PC-9 (cell line): ENCODE measurements at regions of chr5 and their contacts with region 1.

Region 1: DNA sequence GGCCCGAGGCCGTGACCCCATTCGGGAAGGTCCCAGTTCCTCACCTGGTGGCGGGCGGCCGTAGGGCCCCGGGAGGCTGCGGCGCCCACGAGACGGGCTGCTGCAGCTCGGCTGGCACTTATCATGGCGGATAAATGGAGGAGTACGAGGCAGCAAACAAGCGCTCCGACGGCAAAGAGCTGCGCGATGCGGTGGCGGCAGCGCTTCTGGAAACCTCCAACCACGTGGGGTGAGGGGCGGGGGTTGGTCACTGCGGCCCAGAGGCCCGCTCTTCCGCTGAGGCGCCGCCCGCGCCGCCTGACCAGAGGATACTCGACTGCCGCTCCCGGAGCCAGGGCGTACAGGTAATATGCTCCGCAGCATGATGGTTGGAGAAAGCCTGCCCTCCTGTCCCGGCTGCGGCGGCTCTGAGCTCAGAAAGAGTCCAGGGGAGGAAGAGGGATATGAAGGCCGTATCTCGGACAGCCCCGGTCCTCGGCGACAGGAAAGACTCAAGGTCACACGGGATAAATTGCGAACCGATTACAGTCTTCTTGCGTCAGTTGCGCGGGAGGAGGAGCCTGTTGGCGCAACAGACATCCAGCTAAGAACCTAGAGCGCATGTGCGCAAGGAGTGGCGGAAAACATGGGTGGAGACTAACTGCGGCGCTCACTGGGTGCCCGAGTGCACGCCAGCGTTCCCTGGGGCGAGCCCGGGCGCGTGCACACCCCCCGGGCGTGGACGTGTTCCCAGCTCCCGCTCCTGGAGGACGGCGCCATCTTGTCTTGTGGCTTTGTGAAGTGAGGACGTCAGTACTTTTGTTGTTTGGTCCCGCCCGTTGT is at the start of gene HSPA9:
- DNase-seq: peak; percentile 94 to 98
- H3K4me3 ChIP-seq: peak within 1 kb of the TSS; percentile 99
- H3K27ac ChIP-seq: peak within 1 kb of the TSS; percentile 99
- H3K4me1 ChIP-seq: peaks cover 27% of the 10 kb centered on the region
- H3K27me3 ChIP-seq: no peaks in the 10 kb centered on the region
- CTCF ChIP-seq: no peak; the same call in 1 of the 2 replicates
- total RNA-seq, gene HSPA9: 252 and 256 TPM in 2 replicates

Region 2: DNA sequence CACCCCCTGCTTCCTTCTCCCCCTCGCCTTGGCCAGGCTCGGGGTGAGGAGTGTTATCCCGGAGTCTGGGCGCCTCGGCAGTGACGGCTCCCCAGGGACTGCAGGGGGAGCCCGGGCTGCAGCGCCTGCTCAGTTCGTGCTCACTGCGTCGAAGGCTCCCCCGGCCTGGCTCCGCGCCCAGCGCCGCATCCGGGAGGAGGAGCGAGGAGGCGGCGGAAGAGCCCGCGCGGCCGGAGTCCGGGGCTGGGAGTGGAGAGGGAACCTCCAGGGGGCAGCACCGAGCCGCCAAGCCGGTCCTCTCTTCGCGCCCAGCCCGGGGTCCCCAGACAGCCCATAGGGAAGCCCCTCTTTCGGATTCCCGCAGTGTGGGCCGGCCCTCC is 111.4 kb before region 1 on chr5:
- CTCF ChIA-PET with region 1: no interaction called
- POLR2A ChIA-PET with region 1: interaction called, 3 read pairs
- intact Hi-C with region 1: loop called (anchors 1 kb)
- DNase-seq: peak; percentile 78 to 94
- H3K4me3 ChIP-seq: peak overlapping the region; percentile 80
- H3K27ac ChIP-seq: peak overlapping the region; percentile 81
- H3K4me1 ChIP-seq: peaks cover 6% of the 10 kb centered on the region
- H3K27me3 ChIP-seq: no peaks in the 10 kb centered on the region
- CTCF ChIP-seq: peak; percentile 93

Region 3: GRCh38 chr5:138641547-138642298 is 66.3 kb after region 1 on chr5:
- CTCF ChIA-PET with region 1: interaction called, 10 read pairs
- POLR2A ChIA-PET with region 1: no interaction called
- intact Hi-C with region 1: loop called (anchors 5 kb)
- DNase-seq: peak; percentile 45 to 80
- H3K4me3 ChIP-seq: no peak overlapping the region
- H3K27ac ChIP-seq: no peak overlapping the region
- H3K4me1 ChIP-seq: no peaks in the 10 kb centered on the region
- H3K27me3 ChIP-seq: no peaks in the 10 kb centered on the region
- CTCF ChIP-seq: peak; percentile 94

Region 4: GRCh38 chr5:138752951-138753793 is 177.8 kb after region 1 on chr5 and contains the start of gene CTNNA1:
- CTCF ChIA-PET with region 1: no interaction called
- POLR2A ChIA-PET with region 1: interaction called, 4 read pairs
- intact Hi-C with region 1: loop called (anchors 10 kb)
- DNase-seq: peak; percentile 70 to 89
- H3K4me3 ChIP-seq: peak within 1 kb of the TSS; percentile 60
- H3K27ac ChIP-seq: peak within 1 kb of the TSS; percentile 74
- H3K4me1 ChIP-seq: peaks cover 30% of the 10 kb centered on the region
- H3K27me3 ChIP-seq: no peaks in the 10 kb centered on the region
- CTCF ChIP-seq: no peak
- total RNA-seq, gene CTNNA1: 91.7 and 94.0 TPM in 2 replicates

Region 5: GRCh38 chr5:139262742-139263445 is 687.5 kb after region 1 on chr5:
- CTCF ChIA-PET with region 1: interaction called, 3 read pairs
- POLR2A ChIA-PET with region 1: no interaction called
- intact Hi-C with region 1: loop called (anchors 1 kb)
- DNase-seq: peak; percentile 73 to 80
- H3K4me3 ChIP-seq: no peak overlapping the region
- H3K27ac ChIP-seq: no peak overlapping the region
- H3K4me1 ChIP-seq: no peaks in the 10 kb centered on the region
- H3K27me3 ChIP-seq: peaks cover 6% of the 10 kb centered on the region; the same call in 1 of the 2 replicates
- CTCF ChIP-seq: peak; percentile 83

Region 6: GRCh38 chr5:139517683-139518564 is 942.5 kb after region 1 on chr5:
- CTCF ChIA-PET with region 1: interaction called, 16 read pairs
- POLR2A ChIA-PET with region 1: interaction called, 4 read pairs
- intact Hi-C with region 1: no loop called
- DNase-seq: peak; percentile 57 to 89
- H3K4me3 ChIP-seq: peak overlapping the region; percentile 60
- H3K27ac ChIP-seq: no peak overlapping the region
- H3K4me1 ChIP-seq: no peaks in the 10 kb centered on the region
- H3K27me3 ChIP-seq: no peaks in the 10 kb centered on the region
- CTCF ChIP-seq: peak; percentile 93